ENCODE measurements at regions of chr12 and their contacts with region 1.

Region 1: DNA sequence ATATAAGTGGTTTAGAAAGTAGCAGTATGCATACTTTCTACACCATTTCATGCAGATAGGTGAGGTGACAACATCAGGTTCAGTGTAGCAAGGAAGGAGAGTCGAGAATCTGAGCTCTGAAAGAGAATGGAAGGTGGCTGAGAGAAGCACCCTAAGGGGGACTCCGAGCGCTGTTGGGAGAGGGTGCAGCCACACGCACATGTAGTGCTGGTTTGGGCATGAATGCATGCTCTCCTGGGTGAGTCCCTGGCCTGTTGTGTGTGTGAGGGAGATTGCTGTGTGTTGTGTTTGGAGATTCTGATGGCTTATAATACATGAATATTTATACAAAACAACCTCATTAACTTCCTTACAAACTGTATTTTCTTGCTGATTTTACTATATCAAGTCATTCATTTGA is 180.3 kb upstream of the LRIG3 start:
- DNase-seq: no peak
- ATAC-seq: no peak
- H3K4me3 ChIP-seq: no peak overlapping the region
- H3K27ac ChIP-seq: no peak overlapping the region
- H3K4me1 ChIP-seq: no peaks in the 10 kb centered on the region
- H3K27me3 ChIP-seq: no peaks in the 10 kb centered on the region
- CTCF ChIP-seq: no peak

Region 2: DNA sequence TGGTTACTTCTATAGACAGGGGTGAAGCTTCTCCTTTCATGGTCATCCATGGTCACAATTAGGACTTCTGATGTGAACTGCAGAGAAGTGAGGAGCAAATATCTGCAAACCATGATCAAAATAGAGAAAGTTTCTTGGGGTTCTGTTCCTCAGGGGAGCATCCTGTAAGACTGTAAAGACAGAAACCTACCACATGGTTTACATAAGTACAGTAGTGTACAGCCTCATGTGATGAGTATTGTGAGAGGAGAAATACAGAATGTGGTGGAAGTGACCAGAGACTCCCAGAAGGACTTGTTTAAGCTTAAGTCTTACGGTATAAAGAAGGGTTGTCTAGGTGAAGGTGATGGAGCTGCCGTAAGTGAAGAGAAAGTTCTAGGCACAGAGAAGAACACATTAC is 664.9 kb before region 1 on chr12:
- intact Hi-C with region 1: loop called in 1 of 2 experiments (anchors 10 kb)
- DNase-seq: no peak
- ATAC-seq: no peak
- H3K4me3 ChIP-seq: no peak overlapping the region
- H3K27ac ChIP-seq: no peak overlapping the region
- H3K4me1 ChIP-seq: no peaks in the 10 kb centered on the region
- H3K27me3 ChIP-seq: no peaks in the 10 kb centered on the region
- CTCF ChIP-seq: no peak

Region 3: DNA sequence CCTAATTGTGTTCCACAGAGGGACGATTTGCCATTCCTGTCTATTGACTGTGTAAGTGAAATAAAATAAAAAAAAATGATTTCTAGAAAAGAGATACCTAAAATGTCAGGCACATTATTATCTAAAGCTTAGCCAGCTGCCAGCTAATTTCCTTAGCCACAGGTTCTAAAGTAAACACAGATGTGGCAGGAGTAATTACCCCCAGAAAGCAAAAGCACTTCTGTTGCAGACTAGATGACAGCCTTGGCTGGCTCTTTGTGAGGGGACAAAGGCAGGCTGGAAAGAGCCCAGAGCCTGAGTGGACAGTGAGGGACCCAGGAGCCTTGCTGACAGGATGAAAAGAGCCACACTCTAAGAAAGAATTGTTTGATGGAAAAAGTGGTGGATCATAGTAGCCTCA is 598.4 kb before region 1 on chr12:
- intact Hi-C with region 1: no loop called
- DNase-seq: no peak
- ATAC-seq: no peak
- H3K4me3 ChIP-seq: no peak overlapping the region
- H3K27ac ChIP-seq: no peak overlapping the region
- H3K4me1 ChIP-seq: no peaks in the 10 kb centered on the region
- H3K27me3 ChIP-seq: no peaks in the 10 kb centered on the region
- CTCF ChIP-seq: no peak

Region 4: GRCh38 chr12:58961166-58961565 is 139.4 kb before region 1 on chr12:
- intact Hi-C with region 1: no loop called
- DNase-seq: no peak
- ATAC-seq: no peak
- H3K4me3 ChIP-seq: no peak overlapping the region
- H3K27ac ChIP-seq: no peak overlapping the region
- H3K4me1 ChIP-seq: no peaks in the 10 kb centered on the region
- H3K27me3 ChIP-seq: no peaks in the 10 kb centered on the region
- CTCF ChIP-seq: no peak

Region 5: DNA sequence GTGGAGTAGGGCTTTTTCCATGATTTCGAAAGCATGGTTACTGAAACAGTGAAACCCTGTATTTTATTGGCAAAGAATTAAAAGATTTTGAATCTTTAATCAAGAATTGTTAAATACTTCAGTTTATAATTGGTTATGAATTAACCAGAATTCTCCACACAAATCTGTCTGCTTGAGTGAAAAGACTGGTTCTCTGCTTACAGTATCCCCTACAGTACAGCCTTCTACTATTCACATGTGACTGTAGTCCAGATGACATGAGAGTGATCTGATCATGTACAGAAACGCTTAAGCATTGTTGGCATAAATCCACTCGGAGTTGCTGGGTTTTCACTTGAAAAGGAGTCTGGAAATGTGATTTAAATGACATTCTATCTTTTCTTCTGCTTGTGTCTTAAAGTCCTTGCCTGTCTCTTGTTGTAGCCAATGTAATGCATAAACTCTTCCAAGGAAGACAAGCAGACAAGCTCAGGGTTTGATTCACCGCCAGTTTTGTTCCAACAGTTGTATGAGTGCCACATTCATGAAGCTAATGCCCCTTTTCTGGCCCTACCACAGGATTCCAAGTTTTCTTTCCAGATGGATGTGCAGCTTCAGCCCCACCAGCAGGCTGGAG is 41.7 kb after region 1 on chr12:
- intact Hi-C with region 1: no loop called
- DNase-seq: no peak
- ATAC-seq: no peak
- H3K4me3 ChIP-seq: no peak overlapping the region
- H3K27ac ChIP-seq: no peak overlapping the region
- H3K4me1 ChIP-seq: no peaks in the 10 kb centered on the region
- H3K27me3 ChIP-seq: no peaks in the 10 kb centered on the region
- CTCF ChIP-seq: no peak